PC-3 (cell line): ENCODE measurements at regions of chr10 and their contacts with region 1.

Region 1: GRCh38 chr10:89391917-89392756 is at the start of gene IFIT1:
- DNase-seq: peak; percentile 75
- ATAC-seq: peak; percentile 87
- H3K4me3 ChIP-seq: peak within 1 kb of the TSS; percentile 78
- H3K27ac ChIP-seq: peak within 1 kb of the TSS; percentile 13
- H3K4me1 ChIP-seq: peaks cover 18% of the 10 kb centered on the region
- H3K27me3 ChIP-seq: no peaks in the 10 kb centered on the region
- CTCF ChIP-seq: peak; percentile 18; the same call in 1 of the 2 replicates
- total RNA-seq, gene IFIT1: 14.1 and 19.6 TPM in 2 replicates

Region 2: GRCh38 chr10:89029785-89030437 is 362.2 kb before region 1 on chr10:
- CTCF ChIA-PET with region 1: no interaction called
- POLR2A ChIA-PET with region 1: no interaction called
- intact Hi-C with region 1: loop called (anchors 10 kb)
- DNase-seq: peak; percentile 73
- ATAC-seq: peak; percentile 54
- H3K4me3 ChIP-seq: 0 out of 2 replicates have a peak overlapping the region, but pooled peaks have one; percentile 43
- H3K27ac ChIP-seq: no peak overlapping the region
- H3K4me1 ChIP-seq: peaks cover 22% of the 10 kb centered on the region
- H3K27me3 ChIP-seq: no peaks in the 10 kb centered on the region
- CTCF ChIP-seq: peak; percentile 83

Region 3: GRCh38 chr10:89251409-89252224 is 140.5 kb before region 1 on chr10 and contains the start of gene LIPA:
- CTCF ChIA-PET with region 1: interaction called, 5 read pairs
- POLR2A ChIA-PET with region 1: interaction called, 11 read pairs
- intact Hi-C with region 1: no loop called
- DNase-seq: peak; percentile 95
- ATAC-seq: peak; percentile 95
- H3K4me3 ChIP-seq: peak within 1 kb of the TSS; percentile 88
- H3K27ac ChIP-seq: no peak within 1 kb of the TSS; the same call in 1 of the 2 replicates
- H3K4me1 ChIP-seq: peaks cover 5% of the 10 kb centered on the region; the same call in 1 of the 2 replicates
- H3K27me3 ChIP-seq: no peaks in the 10 kb centered on the region
- CTCF ChIP-seq: no peak
- total RNA-seq, gene LIPA: 54.4 and 55.7 TPM in 2 replicates

Region 4: DNA sequence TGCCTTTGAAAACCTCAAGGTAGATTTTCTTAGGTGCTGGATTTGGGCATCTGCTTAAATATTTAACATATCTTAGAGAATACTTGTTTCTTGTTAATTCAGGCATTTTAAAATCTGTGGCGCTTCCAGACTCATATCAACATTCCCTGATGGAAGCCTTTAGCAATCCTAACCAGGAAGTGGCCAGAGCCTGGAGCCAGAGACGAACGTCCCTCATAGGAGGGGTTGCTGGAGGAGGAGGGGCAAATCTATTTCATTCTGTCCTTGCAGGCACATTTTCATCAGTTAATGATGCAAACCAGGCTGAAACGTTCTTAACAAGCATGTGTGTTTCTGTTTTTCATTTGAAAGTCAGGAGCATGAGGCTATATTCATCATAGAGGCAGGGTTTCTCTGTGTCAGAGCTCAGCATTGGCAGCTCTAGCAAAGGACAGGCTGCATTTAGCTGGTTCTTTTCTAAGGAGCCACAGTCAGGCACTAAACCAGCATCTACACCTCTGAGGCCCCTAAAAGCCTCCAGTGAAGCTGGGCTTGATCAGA is 108.1 kb before region 1 on chr10:
- CTCF ChIA-PET with region 1: interaction called, 3 read pairs
- POLR2A ChIA-PET with region 1: interaction called, 14 read pairs
- intact Hi-C with region 1: no loop called
- DNase-seq: peak; percentile 64
- ATAC-seq: peak; percentile 60
- H3K4me3 ChIP-seq: peak overlapping the region; percentile 50
- H3K27ac ChIP-seq: peak overlapping the region; percentile 96
- H3K4me1 ChIP-seq: peaks cover 56% of the 10 kb centered on the region
- H3K27me3 ChIP-seq: no peaks in the 10 kb centered on the region
- CTCF ChIP-seq: no peak

Region 5: DNA sequence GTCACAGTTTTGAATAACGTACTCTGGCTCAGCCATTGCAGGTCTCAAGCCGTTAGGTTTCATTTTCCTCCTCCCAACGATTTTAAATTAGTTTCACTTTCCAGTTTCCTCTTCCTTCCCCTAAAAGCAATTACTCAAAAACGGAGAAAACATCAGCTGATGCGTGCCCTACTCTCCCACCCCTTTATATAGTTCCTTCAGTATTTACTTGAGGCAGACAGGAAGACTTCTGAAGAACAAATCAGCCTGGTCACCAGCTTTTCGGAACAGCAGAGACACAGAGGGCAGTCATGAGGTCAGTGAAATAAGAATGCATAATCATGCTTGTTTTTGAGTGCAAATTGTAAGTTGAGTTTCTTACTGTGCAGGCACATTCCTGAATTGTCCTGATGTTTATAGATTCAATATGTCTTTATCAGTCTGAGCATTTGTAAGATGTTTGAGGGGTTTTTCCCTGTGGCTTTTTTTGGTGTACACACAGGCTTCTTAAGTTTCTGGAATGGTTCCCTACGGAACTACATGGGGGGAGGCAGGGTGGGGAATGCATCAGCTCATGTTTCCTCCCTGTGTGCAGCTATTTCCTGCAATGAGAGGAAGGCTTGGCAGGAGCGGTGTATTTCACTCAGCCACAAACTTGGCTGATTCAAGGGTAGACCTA is 64.2 kb before region 1 on chr10 and contains the start of gene IFIT3:
- CTCF ChIA-PET with region 1: interaction called, 4 read pairs
- POLR2A ChIA-PET with region 1: interaction called, 3 read pairs
- intact Hi-C with region 1: loop called (anchors 5 kb)
- DNase-seq: peak; percentile 80
- ATAC-seq: peak; percentile 78
- H3K4me3 ChIP-seq: peak within 1 kb of the TSS; percentile 75
- H3K27ac ChIP-seq: peak within 1 kb of the TSS; percentile 94
- H3K4me1 ChIP-seq: peaks cover 45% of the 10 kb centered on the region
- H3K27me3 ChIP-seq: no peaks in the 10 kb centered on the region
- CTCF ChIP-seq: no peak
- total RNA-seq, gene IFIT3: 5.0 and 7.1 TPM in 2 replicates

Region 6: GRCh38 chr10:89369156-89370105 is 22.7 kb before region 1 on chr10:
- CTCF ChIA-PET with region 1: interaction called, 5 read pairs
- POLR2A ChIA-PET with region 1: interaction called, 11 read pairs
- intact Hi-C with region 1: loop called (anchors 1 kb)
- DNase-seq: peak; percentile 59
- ATAC-seq: peak; percentile 39
- H3K4me3 ChIP-seq: no peak overlapping the region
- H3K27ac ChIP-seq: peak overlapping the region; percentile 13; the same call in 1 of the 2 replicates
- H3K4me1 ChIP-seq: peaks cover 34% of the 10 kb centered on the region
- H3K27me3 ChIP-seq: no peaks in the 10 kb centered on the region
- CTCF ChIP-seq: peak; percentile 80

Region 7: GRCh38 chr10:89466599-89467035 is 74.5 kb after region 1 on chr10:
- CTCF ChIA-PET with region 1: interaction called, 16 read pairs
- POLR2A ChIA-PET with region 1: no interaction called
- intact Hi-C with region 1: no loop called
- DNase-seq: peak; percentile 93
- ATAC-seq: peak; percentile 94
- H3K4me3 ChIP-seq: no peak overlapping the region; the same call in 1 of the 2 replicates
- H3K27ac ChIP-seq: 0 out of 2 replicates have a peak overlapping the region, but pooled peaks have one; percentile 16
- H3K4me1 ChIP-seq: peaks cover 32% of the 10 kb centered on the region
- H3K27me3 ChIP-seq: no peaks in the 10 kb centered on the region
- CTCF ChIP-seq: peak; percentile 72